MCF 10A (cell line): ENCODE measurements at regions of chr19 and their contacts with region 1.

Region 1: DNA sequence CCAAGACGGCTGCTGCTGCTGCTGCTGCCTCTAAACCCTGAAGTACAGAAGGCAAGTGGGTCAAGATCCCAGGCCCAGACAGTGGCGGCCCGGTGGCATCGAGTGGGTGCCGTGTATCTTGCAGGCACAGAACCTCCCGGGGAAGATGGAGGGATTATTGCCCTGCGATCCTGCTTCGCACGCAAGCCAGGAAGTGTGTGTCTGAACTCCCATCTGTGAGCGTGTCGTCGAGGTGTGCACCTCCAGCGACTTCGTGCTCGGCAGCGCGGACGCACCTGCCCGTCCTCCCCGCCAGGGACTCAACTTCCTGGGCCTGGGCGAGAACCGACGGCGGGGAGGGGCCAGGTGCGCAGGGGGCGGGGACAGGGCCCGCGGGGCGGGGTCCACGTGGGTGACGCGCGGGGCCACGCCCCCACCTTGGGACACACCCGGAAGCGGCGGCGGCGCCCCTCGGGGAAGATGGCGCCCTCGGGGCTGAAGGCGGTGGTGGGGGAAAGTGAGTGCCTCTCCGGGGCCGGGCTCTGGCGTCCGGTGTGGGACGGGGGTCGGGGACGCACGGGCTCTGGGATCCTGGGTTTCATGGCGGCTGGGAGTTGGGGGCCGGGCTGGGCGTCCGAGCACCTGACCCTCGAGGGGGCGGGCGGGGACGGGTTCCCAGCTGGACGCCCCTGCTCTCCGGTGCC is at the start of gene STXBP2:
- DNase-seq: peak; percentile 80
- H3K4me3 Mint-ChIP-seq: peak within 1 kb of the TSS; percentile 80
- H3K27ac Mint-ChIP-seq: peak within 1 kb of the TSS; percentile 90
- H3K4me1 Mint-ChIP-seq: peaks cover 5% of the 10 kb centered on the region
- H3K27me3 Mint-ChIP-seq: no peaks in the 10 kb centered on the region
- CTCF ChIP-seq: no peak
- total RNA-seq, gene STXBP2: 94.4 and 102 TPM in 2 replicates

Region 2: DNA sequence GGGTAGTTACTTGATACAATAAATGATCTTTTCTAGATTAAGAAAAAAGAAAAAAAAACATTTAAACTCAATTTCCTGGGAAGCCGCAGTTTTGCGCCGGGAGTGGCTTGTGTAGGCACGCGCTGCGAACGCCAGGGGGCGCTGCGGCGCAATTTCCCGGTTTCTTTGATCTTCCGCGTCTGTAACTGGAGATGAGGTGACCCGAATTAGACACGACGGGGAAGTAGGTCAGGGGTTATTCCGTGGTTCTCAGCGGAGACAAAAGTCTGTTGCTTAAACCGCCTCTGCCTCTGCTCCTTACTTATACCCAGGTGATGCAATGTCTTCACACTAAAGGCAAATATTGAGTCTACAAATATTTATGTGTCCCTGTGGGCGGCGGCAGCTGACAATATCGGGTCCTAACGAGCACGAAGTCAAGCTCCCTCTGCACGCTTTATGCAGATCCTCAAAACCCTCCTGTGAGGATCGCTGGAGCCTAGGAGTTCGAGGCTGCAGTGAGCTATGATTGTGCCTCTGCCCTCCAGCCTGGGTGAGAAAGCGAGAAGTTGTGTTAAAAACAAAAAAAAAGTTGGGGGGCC is 15.3 kb after region 1 on chr19:
- CTCF ChIA-PET with region 1: interaction called, 11 read pairs
- POLR2A ChIA-PET with region 1: interaction called, 10 read pairs
- intact Hi-C with region 1: no loop called
- DNase-seq: peak; percentile 94
- H3K4me3 Mint-ChIP-seq: peak overlapping the region; percentile 66
- H3K27ac Mint-ChIP-seq: no peak overlapping the region
- H3K4me1 Mint-ChIP-seq: peaks cover 6% of the 10 kb centered on the region
- H3K27me3 Mint-ChIP-seq: no peaks in the 10 kb centered on the region
- CTCF ChIP-seq: peak; percentile 91